Activated naive CD4-positive, alpha-beta T cell treated with anti-CD3 and anti-CD28 coated beads for 36 hours (primary cell): ENCODE measurements at regions of chr9 and their contacts with region 1.

Region 1: GRCh38 chr9:70258692-70259511 is at the start of gene SMC5:
- DNase-seq: peak; percentile 85
- H3K4me3 Mint-ChIP-seq: peak within 1 kb of the TSS; percentile 92
- H3K27ac Mint-ChIP-seq: peak within 1 kb of the TSS; percentile 96
- H3K4me1 Mint-ChIP-seq: peaks cover 61% of the 10 kb centered on the region
- H3K27me3 Mint-ChIP-seq: no peaks in the 10 kb centered on the region
- total RNA-seq, gene SMC5: 30.4 to 31.2 TPM

Region 2: GRCh38 chr9:68895741-68896478 is 1363.0 kb before region 1 on chr9:
- CTCF ChIA-PET with region 1: no interaction called
- intact Hi-C with region 1: loop called (anchors 10 kb)
- DNase-seq: no peak
- H3K4me3 Mint-ChIP-seq: peak overlapping the region; percentile 61
- H3K27ac Mint-ChIP-seq: peak overlapping the region; percentile 89
- H3K4me1 Mint-ChIP-seq: peaks cover 42% of the 10 kb centered on the region
- H3K27me3 Mint-ChIP-seq: no peaks in the 10 kb centered on the region

Region 3: GRCh38 chr9:69759421-69760277 is 499.3 kb before region 1 on chr9 and contains the start of gene PTAR1:
- CTCF ChIA-PET with region 1: no interaction called
- intact Hi-C with region 1: loop called (anchors 1 kb)
- DNase-seq: peak; percentile 90
- H3K4me3 Mint-ChIP-seq: peak within 1 kb of the TSS; percentile 95
- H3K27ac Mint-ChIP-seq: peak within 1 kb of the TSS; percentile 94
- H3K4me1 Mint-ChIP-seq: peaks cover 29% of the 10 kb centered on the region
- H3K27me3 Mint-ChIP-seq: no peaks in the 10 kb centered on the region
- total RNA-seq, gene PTAR1: 41.6 to 44.8 TPM

Region 4: DNA sequence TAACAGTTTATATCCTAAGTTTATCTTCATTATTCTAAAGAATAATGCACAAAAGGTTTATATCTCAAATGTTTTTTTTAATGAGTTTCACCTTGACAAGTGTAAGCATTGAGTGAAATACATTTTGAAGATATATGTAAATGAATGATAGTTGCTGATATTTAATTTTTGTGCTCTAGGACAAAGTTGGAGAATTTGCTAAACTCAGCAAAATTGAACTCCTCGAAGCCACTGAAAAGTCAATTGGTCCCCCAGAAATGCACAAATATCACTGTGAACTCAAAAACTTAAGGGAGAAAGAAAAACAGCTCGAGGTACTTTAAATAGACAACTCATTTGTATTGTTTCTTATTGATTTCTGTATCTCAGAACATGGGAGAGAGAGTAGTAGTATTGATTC is 19.4 kb after region 1 on chr9:
- CTCF ChIA-PET with region 1: no interaction called
- intact Hi-C with region 1: loop called (anchors 2 kb)
- DNase-seq: no peak
- H3K4me3 Mint-ChIP-seq: no peak overlapping the region
- H3K27ac Mint-ChIP-seq: no peak overlapping the region
- H3K4me1 Mint-ChIP-seq: peaks cover 16% of the 10 kb centered on the region
- H3K27me3 Mint-ChIP-seq: no peaks in the 10 kb centered on the region

Region 5: DNA sequence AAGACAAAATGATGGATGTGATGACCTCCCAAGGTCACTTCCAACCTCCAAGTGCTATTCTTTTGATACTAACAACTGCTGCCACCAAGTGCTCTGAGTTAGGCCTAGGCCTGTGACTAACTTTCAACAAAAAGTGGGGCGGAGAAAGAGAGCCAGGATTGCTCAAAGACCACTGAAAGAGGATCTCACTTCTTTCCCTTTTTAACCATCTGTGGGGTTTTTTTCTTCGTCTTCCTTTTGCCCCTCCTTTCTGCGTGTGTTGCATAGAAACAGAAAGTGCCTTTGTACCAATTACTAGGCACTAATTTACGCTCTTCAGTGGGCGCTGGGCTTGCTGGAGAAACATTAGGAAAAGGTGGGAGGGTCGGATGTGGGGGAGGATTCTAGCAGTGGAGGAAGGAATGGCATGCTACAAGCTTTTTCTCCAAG is 147.5 kb after region 1 on chr9:
- CTCF ChIA-PET with region 1: interaction called, 3 read pairs
- intact Hi-C with region 1: loop called (anchors 1 kb)
- DNase-seq: peak; percentile 75
- H3K4me3 Mint-ChIP-seq: peak overlapping the region; percentile 76
- H3K27ac Mint-ChIP-seq: peak overlapping the region; percentile 96
- H3K4me1 Mint-ChIP-seq: peaks cover 78% of the 10 kb centered on the region
- H3K27me3 Mint-ChIP-seq: no peaks in the 10 kb centered on the region

Region 6: GRCh38 chr9:70466976-70467561 is 208.2 kb after region 1 on chr9:
- CTCF ChIA-PET with region 1: no interaction called
- intact Hi-C with region 1: loop called (anchors 1 kb)
- DNase-seq: peak; percentile 73
- H3K4me3 Mint-ChIP-seq: peak overlapping the region; percentile 7
- H3K27ac Mint-ChIP-seq: peak overlapping the region; percentile 83
- H3K4me1 Mint-ChIP-seq: peaks cover 72% of the 10 kb centered on the region
- H3K27me3 Mint-ChIP-seq: no peaks in the 10 kb centered on the region